AG04450 (cell line): ENCODE measurements at regions of chr19 and their contacts with region 1.

Region 1: DNA sequence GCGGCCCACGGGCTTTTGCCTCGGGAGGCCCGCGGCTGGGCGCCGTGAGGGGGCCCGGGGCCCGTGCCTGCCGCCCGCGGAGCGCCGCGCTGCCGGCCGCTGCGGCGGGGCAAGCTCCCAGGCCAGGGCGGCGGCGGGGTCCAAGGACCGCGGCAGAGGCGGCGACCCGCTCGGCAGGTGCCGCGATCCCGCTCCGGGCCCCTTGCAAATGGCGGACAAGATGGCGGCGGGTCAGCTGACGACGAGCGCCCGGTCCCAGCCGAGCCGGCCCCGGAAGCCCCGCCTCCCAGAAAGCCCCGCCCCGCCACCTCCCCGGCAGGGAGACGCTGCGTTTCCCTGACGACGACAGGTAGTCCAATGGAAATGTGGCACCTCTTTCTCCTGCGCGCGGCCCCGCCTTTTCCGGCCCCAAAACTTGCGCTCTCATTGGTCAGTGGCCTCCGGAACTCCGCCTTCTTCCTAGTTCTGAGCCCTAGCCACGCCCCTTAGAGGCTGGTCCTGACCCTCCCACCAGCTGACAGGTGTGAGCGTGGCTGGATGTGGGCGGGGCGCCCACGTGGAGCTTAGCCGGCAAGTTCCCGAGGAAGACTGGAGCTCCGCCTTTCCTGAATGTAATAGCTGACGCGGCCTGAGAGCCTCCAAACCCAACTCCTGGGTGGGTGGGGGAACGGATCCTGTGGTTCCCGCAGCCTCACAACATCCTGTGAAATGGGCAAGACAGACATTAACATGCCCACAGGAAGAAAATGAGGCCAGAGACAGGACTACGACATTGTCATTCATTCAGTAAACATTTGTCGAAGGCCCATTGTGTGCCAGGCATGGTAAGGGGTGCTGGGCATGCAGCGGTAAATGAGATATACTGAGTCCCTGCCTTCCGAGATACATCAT is at the start of gene AP3D1:
- DNase-seq: peak; percentile 99
- H3K4me3 ChIP-seq: peak within 1 kb of the TSS; percentile 94
- H3K27ac ChIP-seq: peak within 1 kb of the TSS; percentile 77
- H3K27me3 ChIP-seq: no peaks in the 10 kb centered on the region
- CTCF ChIP-seq: no peak
- polyA plus RNA-seq, gene AP3D1: 68.2 and 94.4 TPM in 2 replicates

Region 2: GRCh38 chr19:2176337-2176994 is 24.9 kb after region 1 on chr19:
- CTCF ChIA-PET with region 1: interaction called, 14 read pairs
- POLR2A ChIA-PET with region 1: no interaction called
- DNase-seq: no peak
- H3K4me3 ChIP-seq: no peak overlapping the region
- H3K27ac ChIP-seq: no peak overlapping the region
- H3K27me3 ChIP-seq: no peaks in the 10 kb centered on the region
- CTCF ChIP-seq: no peak

Region 3: DNA sequence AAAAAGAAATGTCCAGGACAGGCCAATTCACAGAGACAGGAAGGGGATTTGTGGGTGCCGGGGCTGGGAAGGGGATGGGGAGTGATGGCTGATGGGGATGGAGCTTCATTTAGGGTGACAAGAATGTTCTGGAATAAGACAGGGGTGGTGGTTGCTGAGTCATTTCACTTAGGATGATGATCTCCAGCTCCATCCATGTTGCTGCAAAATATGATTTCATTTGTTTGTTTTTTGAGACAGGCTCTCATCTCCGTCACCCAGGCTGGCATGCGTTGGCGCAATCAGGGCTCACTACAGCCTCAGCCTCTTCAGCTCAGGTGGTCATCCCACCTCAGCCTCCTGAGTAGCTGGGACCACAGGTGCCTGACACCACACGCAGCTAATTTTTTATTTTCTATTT is 107.7 kb after region 1 on chr19:
- CTCF ChIA-PET with region 1: interaction called, 11 read pairs
- POLR2A ChIA-PET with region 1: interaction called, 3 read pairs
- DNase-seq: no peak
- H3K4me3 ChIP-seq: no peak overlapping the region
- H3K27ac ChIP-seq: no peak overlapping the region
- H3K27me3 ChIP-seq: peaks cover under 1% of the 10 kb centered on the region
- CTCF ChIP-seq: no peak

Region 4: GRCh38 chr19:2273356-2274184 is 122.0 kb after region 1 on chr19:
- CTCF ChIA-PET with region 1: interaction called, 15 read pairs
- POLR2A ChIA-PET with region 1: interaction called, 3 read pairs
- DNase-seq: no peak
- H3K4me3 ChIP-seq: peak overlapping the region; percentile 45
- H3K27ac ChIP-seq: peak overlapping the region; percentile 31
- H3K27me3 ChIP-seq: no peaks in the 10 kb centered on the region
- CTCF ChIP-seq: peak; percentile 82